ENCODE measurements at regions of chr1 and their contacts with region 1.

Region 1: GRCh38 chr1:244835276-244836134 is at the start of gene COX20:
- DNase-seq: peak in 1 of 2 donors; percentile 95
- ATAC-seq: peak; percentile 71 to 89 (median 72)
- H3K4me3 ChIP-seq: peak within 1 kb of the TSS; percentile 61
- H3K4me3 Mint-ChIP-seq: peak within 1 kb of the TSS; percentile 98
- H3K27ac ChIP-seq: peak within 1 kb of the TSS; percentile 99
- H3K27ac Mint-ChIP-seq: peak within 1 kb of the TSS; percentile 96 to 99
- H3K4me1 ChIP-seq: peaks cover 11% of the 10 kb centered on the region
- H3K4me1 Mint-ChIP-seq: peaks cover 48 to 54% of the 10 kb centered on the region in 2 donors
- H3K27me3 ChIP-seq: no peaks in the 10 kb centered on the region
- H3K27me3 Mint-ChIP-seq: no peaks in the 10 kb centered on the region
- CTCF ChIP-seq: no peak
- total RNA-seq, gene COX20: 24.3 to 25.4 (median 24.9) TPM

Region 2: DNA sequence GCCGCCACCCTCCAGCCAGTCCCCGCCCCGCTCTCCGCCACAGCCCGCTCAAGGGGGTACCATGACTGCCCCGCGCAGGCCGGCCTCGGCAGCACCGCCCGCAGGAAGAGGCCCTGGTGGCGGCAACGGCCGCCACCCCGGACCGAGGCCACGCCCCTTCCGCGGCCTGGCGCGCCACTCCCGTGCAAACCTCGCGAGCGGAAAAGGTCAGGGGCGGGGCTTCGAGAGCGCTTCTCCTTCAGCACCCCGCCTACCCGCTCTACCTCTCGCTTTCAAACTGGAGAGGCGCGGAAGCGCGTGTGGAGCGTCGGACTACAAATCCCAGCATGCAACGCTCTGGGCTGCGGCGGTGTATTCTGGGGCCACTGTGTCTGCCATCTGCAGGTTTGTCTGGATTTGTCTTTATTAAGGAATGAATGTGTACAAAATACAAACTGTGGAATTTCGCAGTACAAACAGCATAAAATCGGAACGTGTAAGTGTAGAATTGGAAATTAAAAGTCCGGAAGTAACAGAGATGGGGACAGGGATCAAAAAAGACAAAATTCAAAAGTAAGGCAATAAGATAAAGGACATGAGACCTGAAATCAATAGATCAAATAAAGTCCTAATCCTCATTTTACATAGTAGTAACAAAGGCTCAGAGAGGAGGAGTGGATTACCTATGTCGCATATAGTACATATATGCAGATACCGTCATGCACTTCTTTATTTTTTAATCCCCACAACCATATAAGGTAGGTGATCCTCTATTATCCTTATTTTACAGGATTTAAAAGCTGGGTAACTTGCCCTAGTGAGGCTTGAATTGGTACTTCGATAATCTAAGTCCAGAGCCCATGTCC is 383.3 kb before region 1 on chr1:
- intact Hi-C with region 1: loop called (anchors 2 kb)
- DNase-seq: peak; percentile 98 to 100
- ATAC-seq: peak; percentile 85 to 96 (median 90)
- H3K4me3 ChIP-seq: peak overlapping the region; percentile 72
- H3K4me3 Mint-ChIP-seq: peak overlapping the region; percentile 80
- H3K27ac ChIP-seq: peak overlapping the region; percentile 92
- H3K27ac Mint-ChIP-seq: peak overlapping the region; percentile 85 to 88
- H3K4me1 ChIP-seq: peaks cover 9% of the 10 kb centered on the region
- H3K4me1 Mint-ChIP-seq: peaks cover 33 to 37% of the 10 kb centered on the region in 2 donors
- H3K27me3 ChIP-seq: no peaks in the 10 kb centered on the region
- H3K27me3 Mint-ChIP-seq: no peaks in the 10 kb centered on the region
- CTCF ChIP-seq: peak; percentile 31

Region 3: DNA sequence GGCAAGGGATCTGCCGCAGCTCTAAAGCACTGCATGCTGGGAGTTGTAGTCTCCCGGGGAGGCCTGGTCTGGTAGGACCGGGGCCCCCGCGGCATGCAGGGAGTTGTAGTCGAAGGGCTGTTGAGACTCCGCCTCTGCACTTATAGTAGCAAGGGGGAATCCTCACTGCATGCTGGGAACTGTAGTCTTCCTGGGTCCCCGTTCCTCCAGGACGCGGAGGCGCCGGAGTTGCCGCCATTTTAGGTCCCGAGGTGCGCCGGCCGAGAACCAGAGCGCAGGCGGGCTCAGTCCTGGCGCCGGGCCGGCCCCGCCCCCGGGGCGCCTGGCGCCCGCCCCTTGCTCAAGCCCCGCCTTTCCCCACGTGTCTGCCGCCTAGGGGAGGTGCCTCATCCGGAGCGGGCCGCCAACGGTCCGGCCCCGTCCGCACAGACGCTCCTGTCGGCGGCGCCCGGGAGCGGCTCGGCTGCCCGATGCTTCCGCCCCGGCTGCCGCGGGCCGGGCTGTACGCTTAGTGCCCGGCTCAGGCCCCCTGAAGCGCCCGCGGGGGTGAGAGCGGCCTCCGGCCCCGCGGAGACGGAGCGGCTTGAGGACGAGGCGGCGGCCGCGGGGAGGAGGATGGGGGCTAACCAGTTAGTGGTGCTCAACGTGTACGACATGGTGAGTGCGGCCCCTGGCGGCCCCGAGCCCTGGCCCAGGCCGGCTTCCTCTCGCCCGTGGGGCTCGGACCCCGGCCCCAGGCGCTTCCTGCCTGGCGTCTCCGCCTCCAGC is 182.6 kb before region 1 on chr1 and contains the start of gene DESI2:
- intact Hi-C with region 1: loop called (anchors 1 kb)
- DNase-seq: peak; percentile 96 to 99
- ATAC-seq: peak; percentile 88 to 96 (median 88)
- H3K4me3 ChIP-seq: peak within 1 kb of the TSS; percentile 90
- H3K4me3 Mint-ChIP-seq: peak within 1 kb of the TSS; percentile 77
- H3K27ac ChIP-seq: peak within 1 kb of the TSS; percentile 76
- H3K27ac Mint-ChIP-seq: peak within 1 kb of the TSS in 1 of 2 donors; percentile 75
- H3K4me1 ChIP-seq: peaks cover 14% of the 10 kb centered on the region
- H3K4me1 Mint-ChIP-seq: peaks cover 19 to 22% of the 10 kb centered on the region in 2 donors
- H3K27me3 ChIP-seq: no peaks in the 10 kb centered on the region
- H3K27me3 Mint-ChIP-seq: peaks cover 0 to 4% of the 10 kb centered on the region in 2 donors
- CTCF ChIP-seq: peak; percentile 48
- total RNA-seq, gene DESI2: 24.1 to 30.5 (median 25.4) TPM

Region 4: GRCh38 chr1:244851546-244852231 is 16.2 kb after region 1 on chr1:
- intact Hi-C with region 1: loop called (anchors 2 kb)
- DNase-seq: no peak
- ATAC-seq: peak in 1 of 3 donors; percentile 14
- H3K4me3 ChIP-seq: no peak overlapping the region
- H3K4me3 Mint-ChIP-seq: peak overlapping the region; percentile 43
- H3K27ac ChIP-seq: no peak overlapping the region
- H3K27ac Mint-ChIP-seq: peak overlapping the region; percentile 80 to 88
- H3K4me1 ChIP-seq: peaks cover 7% of the 10 kb centered on the region
- H3K4me1 Mint-ChIP-seq: peaks cover 64 to 76% of the 10 kb centered on the region in 2 donors
- H3K27me3 ChIP-seq: no peaks in the 10 kb centered on the region
- H3K27me3 Mint-ChIP-seq: no peaks in the 10 kb centered on the region
- CTCF ChIP-seq: no peak

Region 5: DNA sequence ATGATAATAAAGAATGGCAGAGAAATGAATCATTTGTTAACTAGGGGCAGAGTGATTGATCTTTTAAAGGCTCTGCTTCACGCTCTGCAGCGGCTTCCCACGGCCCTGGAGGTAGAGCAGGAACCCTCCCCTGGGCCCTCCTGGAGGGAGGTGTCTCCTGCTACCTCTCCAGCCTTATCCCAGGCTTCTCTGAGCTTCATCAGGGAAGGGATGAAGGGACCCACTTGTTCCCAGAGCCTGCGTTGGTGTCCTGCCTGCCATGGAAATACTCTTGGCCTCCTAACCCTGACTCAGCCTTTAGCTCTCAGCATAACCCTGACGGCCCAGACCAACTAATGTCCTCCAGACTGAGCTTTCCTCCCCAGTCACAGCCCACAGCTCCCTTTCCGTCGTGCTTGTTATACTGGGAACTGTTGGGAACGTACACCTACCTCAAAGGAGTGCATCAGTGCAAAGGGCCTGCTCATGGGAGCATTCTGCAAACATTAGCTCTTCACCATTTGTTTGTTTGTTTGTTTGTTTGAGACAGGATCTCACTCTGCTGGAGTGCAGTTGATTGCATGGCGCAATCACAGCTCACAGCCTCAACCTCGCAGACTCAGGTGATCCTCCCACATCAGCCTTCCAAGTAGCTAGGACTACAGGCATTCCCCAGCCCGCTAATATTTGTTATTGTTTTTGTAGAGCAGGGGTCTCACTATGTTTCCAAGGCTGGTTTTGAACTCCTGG is 46.2 kb after region 1 on chr1:
- intact Hi-C with region 1: no loop called
- DNase-seq: no peak
- ATAC-seq: no peak
- H3K4me3 ChIP-seq: no peak overlapping the region
- H3K4me3 Mint-ChIP-seq: no peak overlapping the region
- H3K27ac ChIP-seq: no peak overlapping the region
- H3K27ac Mint-ChIP-seq: no peak overlapping the region
- H3K4me1 ChIP-seq: no peaks in the 10 kb centered on the region
- H3K4me1 Mint-ChIP-seq: no peaks in the 10 kb centered on the region
- H3K27me3 ChIP-seq: no peaks in the 10 kb centered on the region
- H3K27me3 Mint-ChIP-seq: no peaks in the 10 kb centered on the region
- CTCF ChIP-seq: no peak

Region 6: DNA sequence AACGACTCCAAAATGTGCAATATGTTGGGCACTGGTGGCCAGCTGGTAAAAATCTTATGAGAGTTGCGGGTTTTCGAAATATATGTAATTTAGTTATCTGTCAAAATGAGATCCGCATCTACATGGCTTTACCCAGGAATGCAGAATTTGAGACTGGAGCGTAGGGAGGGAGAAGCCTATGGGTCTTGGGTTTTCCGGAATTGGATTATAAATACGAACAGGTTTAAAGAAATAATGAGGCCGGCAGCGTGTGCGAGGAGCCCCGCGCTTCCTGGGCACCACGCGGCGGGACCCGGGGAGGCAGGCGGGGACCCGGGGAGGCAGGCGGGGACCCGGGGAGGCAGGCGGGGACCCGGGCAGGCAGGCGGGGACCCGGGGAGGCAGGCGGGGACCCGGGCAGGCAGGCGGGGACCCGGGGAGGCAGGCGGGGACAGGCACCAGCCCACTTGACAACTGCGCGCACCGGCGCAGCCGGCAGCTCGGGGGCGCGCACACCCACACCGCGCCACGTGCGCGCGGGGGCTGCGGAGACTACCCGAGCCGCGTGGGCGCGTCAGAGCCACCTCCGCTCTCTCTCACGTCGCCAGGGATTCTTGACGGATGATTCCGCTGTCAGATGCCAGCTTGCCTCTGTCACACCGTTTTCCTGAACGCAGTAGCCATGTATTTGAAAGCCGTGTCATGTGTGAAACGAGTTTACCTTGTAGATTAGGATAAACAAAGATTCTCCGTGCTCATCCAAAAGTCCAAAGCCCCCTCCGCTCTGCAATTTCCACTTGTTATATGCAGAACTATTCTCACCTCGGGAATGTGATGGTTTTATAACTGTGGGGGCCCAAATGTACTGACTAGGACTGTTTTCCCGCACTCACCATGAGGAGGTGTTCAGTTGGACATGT is 83.2 kb after region 1 on chr1:
- intact Hi-C with region 1: loop called (anchors 2 kb)
- DNase-seq: peak; percentile 67 to 88
- ATAC-seq: peak; percentile 95 to 98 (median 98)
- H3K4me3 ChIP-seq: peak overlapping the region; percentile 44
- H3K4me3 Mint-ChIP-seq: peak overlapping the region; percentile 96
- H3K27ac ChIP-seq: no peak overlapping the region
- H3K27ac Mint-ChIP-seq: peak overlapping the region; percentile 56 to 93
- H3K4me1 ChIP-seq: peaks cover 9% of the 10 kb centered on the region
- H3K4me1 Mint-ChIP-seq: peaks cover 6 to 15% of the 10 kb centered on the region in 2 donors
- H3K27me3 ChIP-seq: no peaks in the 10 kb centered on the region
- H3K27me3 Mint-ChIP-seq: no peaks in the 10 kb centered on the region
- CTCF ChIP-seq: no peak

Measured in natural killer cell (primary cell).